GM12878 (cell line): ENCODE measurements at regions of chr5 and their contacts with region 1.

Region 1: DNA sequence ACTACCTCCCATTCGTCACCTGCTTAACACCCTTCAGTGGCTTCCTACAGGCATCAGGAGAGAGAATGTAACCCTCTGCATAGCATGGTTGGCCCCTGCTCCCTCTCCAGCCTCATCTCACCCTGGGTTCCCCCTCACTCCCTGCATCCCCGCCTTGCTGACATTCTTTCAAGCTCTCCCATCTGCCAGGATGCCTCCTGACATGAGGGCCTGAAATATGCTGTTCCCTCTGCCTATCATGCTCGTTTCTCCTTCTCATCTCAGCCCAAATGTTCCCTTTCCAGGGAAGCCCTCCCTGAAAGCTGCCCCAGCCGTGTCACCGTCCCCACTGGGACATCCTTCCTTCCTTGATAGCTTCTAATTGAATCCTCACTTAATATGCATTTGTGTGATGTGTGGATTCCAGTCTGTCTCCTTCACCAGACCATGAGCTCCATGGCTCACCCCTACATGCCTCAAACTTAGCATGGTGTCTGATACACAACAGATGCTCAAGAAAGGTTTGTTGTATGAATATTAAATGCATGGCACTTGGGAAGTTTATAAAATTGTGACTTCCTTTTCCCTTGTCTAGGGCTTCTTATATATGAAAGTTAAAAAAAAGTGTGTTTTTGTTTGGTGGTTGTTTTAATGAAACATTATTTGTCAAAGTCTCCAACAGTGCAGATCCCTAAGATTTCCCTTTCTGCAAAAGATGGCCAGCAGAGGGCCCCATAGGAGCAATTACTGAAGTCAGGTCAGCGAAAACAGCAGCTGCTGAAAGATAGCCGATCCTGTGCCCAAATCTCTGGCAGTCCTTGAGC is 7.3 kb upstream of the C5orf58 start:
- DNase-seq: peak; percentile 4
- ATAC-seq: peak; percentile 93
- H3K4me3 ChIP-seq: no peak overlapping the region
- H3K27ac ChIP-seq: no peak overlapping the region
- H3K4me1 ChIP-seq: no peaks in the 10 kb centered on the region
- H3K27me3 ChIP-seq: no peaks in the 10 kb centered on the region; a peak in 1 of 4 replicates
- CTCF ChIP-seq: peak; percentile 72 to 91 (median 76)
- EP300 ChIP-seq: no peak
- POLR2A ChIP-seq: no peak
- RAD21 ChIP-seq: peak; percentile 98

Region 2: GRCh38 chr5:169350016-169350415 is 875.5 kb before region 1 on chr5:
- CTCF ChIA-PET with region 1: no interaction called
- POLR2A ChIA-PET with region 1: no interaction called
- RAD21 ChIA-PET with region 1: no interaction called
- SMC1A ChIA-PET with region 1: no interaction called
- in situ Hi-C with region 1: no loop called
- intact Hi-C with region 1: no loop called
- DNase-seq: no peak
- ATAC-seq: no peak
- H3K4me3 ChIP-seq: no peak overlapping the region
- H3K27ac ChIP-seq: no peak overlapping the region
- H3K4me1 ChIP-seq: no peaks in the 10 kb centered on the region
- H3K27me3 ChIP-seq: no peaks in the 10 kb centered on the region; a peak in 1 of 4 replicates
- CTCF ChIP-seq: no peak
- EP300 ChIP-seq: no peak
- POLR2A ChIP-seq: no peak
- RAD21 ChIP-seq: no peak

Region 3: DNA sequence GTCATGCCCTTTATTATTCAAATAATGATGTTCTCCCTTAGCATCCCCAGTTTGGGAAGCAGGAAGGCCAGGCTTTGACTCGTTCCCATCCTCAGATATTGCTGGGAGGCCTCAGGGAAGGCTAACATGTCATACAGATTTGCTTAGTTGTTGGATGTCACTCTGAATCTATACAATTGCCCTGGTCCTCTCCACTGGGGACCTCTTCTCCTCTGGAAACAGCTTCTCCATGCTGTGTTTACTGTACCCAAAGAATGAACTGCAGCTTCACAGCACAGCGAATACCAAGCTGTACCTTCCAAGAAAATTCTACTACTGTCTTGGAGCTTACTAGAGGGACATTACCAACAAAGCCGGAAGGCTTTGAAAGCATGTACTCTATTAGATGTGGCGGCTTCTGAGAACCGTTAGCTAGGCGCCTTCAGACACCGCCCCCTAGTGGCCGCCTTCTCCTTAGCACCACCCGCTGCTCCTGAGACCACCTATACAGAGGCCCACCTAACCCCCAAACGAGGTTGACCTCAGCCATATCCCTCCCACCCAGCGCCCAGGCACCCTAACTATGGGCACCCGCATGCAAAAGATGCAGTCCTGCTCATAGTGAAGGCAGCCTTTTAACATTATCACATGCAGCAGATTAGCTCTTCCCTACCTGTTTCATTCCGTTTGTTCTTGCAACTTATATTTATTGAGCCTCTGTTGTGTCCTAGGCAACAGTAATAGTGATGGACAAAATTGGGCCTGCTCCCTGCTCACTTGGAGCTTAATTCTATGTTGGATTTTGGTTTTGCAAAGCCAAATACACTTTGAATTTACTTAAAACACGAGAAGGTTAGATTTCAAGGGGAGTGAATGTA is 154.7 kb before region 1 on chr5:
- CTCF ChIA-PET with region 1: no interaction called
- POLR2A ChIA-PET with region 1: no interaction called
- RAD21 ChIA-PET with region 1: no interaction called
- SMC1A ChIA-PET with region 1: no interaction called
- in situ Hi-C with region 1: no loop called
- intact Hi-C with region 1: no loop called
- DNase-seq: no peak
- ATAC-seq: 0 out of 3 replicates have a peak, but pooled peaks have one; percentile 14
- H3K4me3 ChIP-seq: no peak overlapping the region
- H3K27ac ChIP-seq: no peak overlapping the region
- H3K4me1 ChIP-seq: no peaks in the 10 kb centered on the region; the same call in 1 of the 2 replicates
- H3K27me3 ChIP-seq: no peaks in the 10 kb centered on the region
- CTCF ChIP-seq: peak; percentile 15 to 51 (median 44); a peak in 4 of 6 replicates
- EP300 ChIP-seq: no peak
- POLR2A ChIP-seq: no peak
- RAD21 ChIP-seq: no peak

Region 4: DNA sequence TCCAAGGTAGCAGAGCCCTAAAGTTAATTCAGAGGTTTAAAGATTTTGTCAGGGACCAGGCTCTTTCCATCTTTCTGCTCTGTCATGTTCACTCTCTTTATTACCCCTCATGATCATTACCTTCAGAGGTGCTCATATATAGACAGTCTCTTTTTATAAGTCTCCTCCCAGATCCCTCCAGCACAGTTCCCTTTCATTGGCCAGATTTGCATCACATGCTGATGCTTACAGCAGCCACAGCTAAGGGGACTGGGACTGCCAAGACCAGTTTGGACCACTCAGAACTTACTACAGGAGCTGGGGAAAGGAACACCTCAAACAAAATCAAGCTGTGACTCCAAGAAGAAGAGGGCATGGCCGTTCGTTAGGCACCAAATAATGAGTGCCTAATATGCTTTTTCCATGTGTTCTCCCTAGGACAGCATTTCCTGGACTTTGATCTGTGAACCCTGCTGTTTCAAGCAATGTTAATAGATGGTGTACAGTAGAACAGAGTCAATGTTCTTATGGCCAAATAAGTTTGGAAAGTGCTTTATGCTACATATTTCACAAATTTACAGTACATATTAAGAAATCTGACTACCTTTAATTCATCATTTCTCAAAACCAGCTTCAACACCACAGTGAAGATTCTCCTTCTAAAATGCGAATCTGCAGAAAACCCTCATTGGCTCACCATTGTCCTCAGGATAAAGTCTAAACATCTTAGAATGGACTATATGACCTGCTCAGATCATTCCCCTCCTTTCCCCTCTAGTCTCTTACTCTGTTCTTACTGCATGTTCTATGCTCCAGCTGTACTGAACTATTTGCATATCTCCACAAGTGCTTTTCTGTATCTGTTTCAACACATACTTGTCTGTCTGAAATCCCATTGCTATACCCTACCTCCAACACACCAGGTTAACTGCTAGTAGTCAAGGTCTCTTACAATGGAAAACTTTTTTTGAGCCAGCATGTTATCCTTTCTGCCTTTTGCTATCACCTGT is 10.6 kb after region 1 on chr5:
- CTCF ChIA-PET with region 1: interaction called, 38 read pairs
- POLR2A ChIA-PET with region 1: no interaction called
- RAD21 ChIA-PET with region 1: interaction called, 3 read pairs
- SMC1A ChIA-PET with region 1: interaction called, 8 read pairs
- in situ Hi-C with region 1: no loop called
- intact Hi-C with region 1: no loop called
- DNase-seq: no peak
- ATAC-seq: no peak; the same call in 2 of the 3 replicates
- H3K4me3 ChIP-seq: no peak overlapping the region
- H3K27ac ChIP-seq: no peak overlapping the region
- H3K4me1 ChIP-seq: no peaks in the 10 kb centered on the region
- H3K27me3 ChIP-seq: no peaks in the 10 kb centered on the region
- CTCF ChIP-seq: no peak
- EP300 ChIP-seq: no peak
- POLR2A ChIP-seq: no peak
- RAD21 ChIP-seq: no peak

Region 5: DNA sequence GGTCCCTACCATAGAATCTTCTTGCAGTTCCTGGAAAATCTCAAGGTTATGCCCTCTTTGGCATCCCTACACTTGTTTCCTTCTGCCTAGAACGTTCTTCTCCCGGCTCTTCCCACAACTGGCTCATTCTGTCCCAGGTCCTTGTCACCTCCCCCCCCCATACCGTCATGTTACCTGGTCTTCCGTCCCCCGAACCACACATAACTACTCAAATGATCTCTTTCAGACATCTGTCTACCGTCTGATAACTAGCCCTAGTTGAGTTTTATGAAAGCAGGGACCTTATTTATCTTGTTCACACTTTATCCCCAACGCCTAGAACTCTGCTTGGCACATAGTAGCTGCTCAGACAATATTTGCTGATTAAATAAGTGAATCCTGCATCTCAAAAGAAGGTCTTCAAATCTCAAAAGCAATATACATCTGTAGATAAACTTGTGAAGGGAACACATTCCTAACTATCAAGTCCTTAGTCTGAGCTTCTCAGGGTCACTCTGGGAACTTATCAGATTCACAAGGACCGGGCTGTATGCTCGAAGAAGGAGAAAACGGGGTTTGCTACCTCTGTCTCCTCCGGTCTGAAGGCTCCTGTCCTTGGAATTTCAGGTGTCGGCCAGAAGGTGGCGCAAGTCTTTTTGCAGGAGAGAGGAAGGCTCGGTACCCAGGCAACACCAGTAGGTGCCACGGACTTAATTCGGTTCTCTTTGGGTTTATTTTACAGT is 42.1 kb after region 1 on chr5:
- CTCF ChIA-PET with region 1: interaction called, 28 read pairs
- POLR2A ChIA-PET with region 1: no interaction called
- RAD21 ChIA-PET with region 1: interaction called, 6 read pairs
- SMC1A ChIA-PET with region 1: interaction called, 34 read pairs
- in situ Hi-C with region 1: no loop called
- intact Hi-C with region 1: no loop called
- DNase-seq: peak; percentile 34
- ATAC-seq: peak; percentile 99
- H3K4me3 ChIP-seq: no peak overlapping the region
- H3K27ac ChIP-seq: no peak overlapping the region; the same call in 1 of the 2 replicates
- H3K4me1 ChIP-seq: peaks cover 7% of the 10 kb centered on the region
- H3K27me3 ChIP-seq: no peaks in the 10 kb centered on the region
- CTCF ChIP-seq: peak; percentile 79 to 88 (median 84)
- EP300 ChIP-seq: no peak
- POLR2A ChIP-seq: no peak
- RAD21 ChIP-seq: peak; percentile 89

Region 6: GRCh38 chr5:170333161-170333910 is 107.8 kb after region 1 on chr5:
- CTCF ChIA-PET with region 1: interaction called, 120 read pairs
- POLR2A ChIA-PET with region 1: no interaction called
- RAD21 ChIA-PET with region 1: interaction called, 60 read pairs
- SMC1A ChIA-PET with region 1: interaction called, 66 read pairs
- in situ Hi-C with region 1: no loop called
- intact Hi-C with region 1: no loop called
- DNase-seq: peak; percentile 79
- ATAC-seq: peak; percentile 54
- H3K4me3 ChIP-seq: no peak overlapping the region
- H3K27ac ChIP-seq: 0 out of 2 replicates have a peak overlapping the region, but pooled peaks have one; percentile 5
- H3K4me1 ChIP-seq: peaks cover 46% of the 10 kb centered on the region
- H3K27me3 ChIP-seq: no peaks in the 10 kb centered on the region
- CTCF ChIP-seq: no peak
- EP300 ChIP-seq: 0 out of 4 replicates have a peak, but pooled peaks of 1 of the 2 experiments have one; percentile 28
- POLR2A ChIP-seq: no peak
- RAD21 ChIP-seq: 0 out of 2 replicates have a peak, but pooled peaks have one; percentile 4

Region 7: DNA sequence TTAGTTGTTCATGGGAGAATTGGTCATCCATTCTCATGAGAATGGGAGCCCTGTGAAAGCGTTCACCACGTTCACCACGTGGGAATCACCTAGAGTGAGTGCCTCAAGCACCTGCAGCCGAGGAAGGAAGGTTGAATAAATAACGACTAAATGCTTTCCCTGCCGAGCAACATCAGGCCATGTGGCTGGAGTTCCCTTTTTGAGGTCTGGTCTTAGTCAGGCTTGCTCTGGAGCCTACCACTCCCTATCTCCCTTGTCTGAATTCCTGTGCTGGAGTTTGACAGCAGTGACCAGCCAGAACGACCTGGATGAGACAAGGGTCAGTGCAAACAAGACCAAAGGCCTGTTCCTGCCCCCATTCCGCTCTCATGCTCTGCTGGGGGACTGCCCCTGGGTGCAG is 135.2 kb after region 1 on chr5:
- CTCF ChIA-PET with region 1: interaction called, 11 read pairs
- POLR2A ChIA-PET with region 1: no interaction called
- RAD21 ChIA-PET with region 1: interaction called, 3 read pairs
- SMC1A ChIA-PET with region 1: no interaction called
- in situ Hi-C with region 1: no loop called
- intact Hi-C with region 1: no loop called
- DNase-seq: no peak
- ATAC-seq: no peak
- H3K4me3 ChIP-seq: no peak overlapping the region
- H3K27ac ChIP-seq: no peak overlapping the region
- H3K4me1 ChIP-seq: peaks cover 6% of the 10 kb centered on the region
- H3K27me3 ChIP-seq: peaks cover 0 to 2% of the 10 kb centered on the region in 2 experiments; a peak in 1 of 4 replicates
- CTCF ChIP-seq: no peak
- EP300 ChIP-seq: no peak
- POLR2A ChIP-seq: no peak
- RAD21 ChIP-seq: no peak

Region 8: DNA sequence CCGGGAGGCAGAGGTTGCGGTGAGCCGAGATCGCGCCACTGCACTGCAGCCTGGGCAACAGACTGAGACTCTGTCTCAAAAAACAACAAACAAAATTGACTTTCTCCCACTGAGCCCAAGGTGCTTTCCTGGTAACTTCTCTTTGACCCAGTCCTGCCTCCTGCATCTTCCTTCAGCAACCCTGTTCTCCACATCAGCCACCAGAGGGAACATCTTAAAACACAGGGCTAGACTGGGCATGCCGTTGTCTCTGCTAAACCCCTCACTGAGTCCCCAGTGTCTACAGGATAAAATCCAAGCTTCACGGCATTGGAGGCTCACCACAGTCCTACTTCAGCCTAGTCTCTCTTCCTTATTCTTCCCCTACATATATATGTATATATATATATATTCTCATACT is 203.5 kb after region 1 on chr5:
- CTCF ChIA-PET with region 1: interaction called, 180 read pairs
- POLR2A ChIA-PET with region 1: no interaction called
- RAD21 ChIA-PET with region 1: interaction called, 5 read pairs
- SMC1A ChIA-PET with region 1: interaction called, 12 read pairs
- in situ Hi-C with region 1: no loop called
- intact Hi-C with region 1: no loop called
- DNase-seq: no peak
- ATAC-seq: no peak
- H3K4me3 ChIP-seq: no peak overlapping the region
- H3K27ac ChIP-seq: no peak overlapping the region
- H3K4me1 ChIP-seq: no peaks in the 10 kb centered on the region
- H3K27me3 ChIP-seq: peaks cover 0 to 2% of the 10 kb centered on the region in 2 experiments; a peak in 2 of 4 replicates
- CTCF ChIP-seq: no peak
- EP300 ChIP-seq: no peak
- POLR2A ChIP-seq: no peak
- RAD21 ChIP-seq: no peak

Region 9: GRCh38 chr5:170633235-170634081 is 407.9 kb after region 1 on chr5:
- CTCF ChIA-PET with region 1: interaction called, 4 read pairs
- POLR2A ChIA-PET with region 1: no interaction called
- RAD21 ChIA-PET with region 1: interaction called, 3 read pairs
- SMC1A ChIA-PET with region 1: no interaction called
- in situ Hi-C with region 1: loop called (anchors 10 kb)
- intact Hi-C with region 1: loop called (anchors 2 kb)
- DNase-seq: peak; percentile 20
- ATAC-seq: peak; percentile 23; the same call in 2 of the 3 replicates
- H3K4me3 ChIP-seq: no peak overlapping the region
- H3K27ac ChIP-seq: no peak overlapping the region
- H3K4me1 ChIP-seq: no peaks in the 10 kb centered on the region
- H3K27me3 ChIP-seq: no peaks in the 10 kb centered on the region
- CTCF ChIP-seq: no peak
- EP300 ChIP-seq: no peak
- POLR2A ChIP-seq: no peak
- RAD21 ChIP-seq: no peak